Activated T-helper 2 cell treated with anti-CD3 and anti-CD28 coated beads, Interferon-gamma antibody, Interleukin-2, Interleukin-4, amounts not matched to agents 10 μg/mL and 5 μg/mL and 100 μg/mL, durations not matched to agents 14 hours and 24 hours and 36 hours (primary cell): ENCODE measurements at regions of chr2 and their contacts with region 1.

Region 1: DNA sequence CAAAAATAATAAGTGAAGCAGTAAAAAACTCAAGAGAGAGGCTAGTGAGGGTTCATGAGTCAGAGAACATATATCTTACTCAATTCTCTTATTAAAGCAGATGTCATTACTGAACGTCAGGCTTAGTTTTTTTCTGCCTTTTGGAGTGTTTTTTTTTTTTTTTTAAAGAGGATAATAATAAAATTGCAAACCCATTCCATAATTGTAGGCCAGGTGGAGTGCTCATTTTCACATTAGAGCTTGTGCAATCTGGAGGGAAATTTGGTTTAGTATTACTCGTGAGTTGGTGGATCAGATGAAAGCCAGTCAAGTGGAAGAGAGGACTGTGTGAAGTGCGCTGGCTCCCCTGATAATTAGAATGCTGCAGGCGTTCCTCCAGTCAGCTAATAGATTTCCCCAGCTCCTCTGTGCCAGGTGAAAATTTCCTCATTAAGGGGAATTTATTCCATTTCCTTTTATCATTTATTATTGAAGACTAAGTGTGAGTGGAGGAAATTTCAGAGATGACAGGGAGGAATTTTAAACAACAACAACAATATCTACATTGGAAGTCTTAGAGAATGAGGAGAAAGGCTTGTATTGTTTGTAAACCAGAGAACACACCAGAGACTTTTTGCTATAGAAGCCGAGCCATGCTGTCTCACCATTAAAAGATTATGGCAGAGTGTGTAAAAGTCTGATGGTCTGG is 74.6 kb downstream of the CPS1 start:
- DNase-seq: no peak
- H3K4me3 Mint-ChIP-seq: no peak overlapping the region
- H3K27ac Mint-ChIP-seq: no peak overlapping the region
- H3K4me1 Mint-ChIP-seq: no peaks in the 10 kb centered on the region
- H3K27me3 Mint-ChIP-seq: no peaks in the 10 kb centered on the region

Region 2: GRCh38 chr2:210577263-210578071 is 53.5 kb before region 1 on chr2:
- intact Hi-C with region 1: loop called (anchors 2 kb)
- DNase-seq: no peak
- H3K4me3 Mint-ChIP-seq: no peak overlapping the region
- H3K27ac Mint-ChIP-seq: no peak overlapping the region
- H3K4me1 Mint-ChIP-seq: no peaks in the 10 kb centered on the region
- H3K27me3 Mint-ChIP-seq: no peaks in the 10 kb centered on the region

Region 3: GRCh38 chr2:210663631-210664089 is 32.6 kb after region 1 on chr2:
- intact Hi-C with region 1: no loop called
- DNase-seq: no peak
- H3K4me3 Mint-ChIP-seq: no peak overlapping the region
- H3K27ac Mint-ChIP-seq: no peak overlapping the region
- H3K4me1 Mint-ChIP-seq: no peaks in the 10 kb centered on the region
- H3K27me3 Mint-ChIP-seq: no peaks in the 10 kb centered on the region